ENCODE measurements at regions of chr3 and their contacts with region 1.

Region 1: DNA sequence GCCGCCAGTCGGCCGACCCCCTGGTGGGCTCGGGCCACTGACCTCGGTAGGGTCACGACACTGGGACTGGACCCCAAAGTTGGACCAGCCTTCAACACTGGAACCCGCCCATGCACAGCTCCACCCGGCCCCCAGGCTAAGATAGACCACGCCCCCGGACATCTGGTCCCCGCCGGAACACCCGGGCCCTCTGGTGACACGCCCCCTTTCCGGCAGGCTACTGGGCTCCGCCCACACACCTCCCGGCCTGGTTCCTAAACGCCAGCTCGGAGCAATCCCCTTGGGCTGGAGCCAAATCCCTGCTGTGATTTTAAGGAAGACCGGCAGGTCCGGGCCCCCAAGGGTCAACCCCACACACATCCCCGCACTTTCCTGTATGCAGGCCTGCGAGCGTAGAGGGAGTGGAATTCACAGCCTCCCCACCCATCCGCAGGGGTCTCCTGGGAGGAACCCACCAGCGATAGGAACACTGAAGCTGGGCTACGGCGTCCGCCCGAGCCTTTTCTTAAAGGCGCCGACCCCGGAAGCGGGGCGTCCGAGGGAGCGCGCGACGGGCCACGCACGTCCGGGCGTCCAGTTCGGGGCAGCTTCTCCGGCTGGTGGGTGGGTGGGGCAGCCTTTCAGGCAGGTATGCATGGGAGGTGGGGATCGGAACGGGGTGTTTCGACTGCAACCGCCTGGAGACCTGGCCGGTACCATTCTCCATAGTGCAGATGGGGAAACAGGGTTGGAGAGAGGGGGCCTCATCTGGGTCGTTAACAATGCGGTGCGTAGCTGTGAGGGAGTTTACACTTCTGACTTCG is at the start of gene HEMK1:
- DNase-seq: peak; percentile 92
- H3K4me3 Mint-ChIP-seq: peak within 1 kb of the TSS; percentile 97
- H3K27ac Mint-ChIP-seq: peak within 1 kb of the TSS; percentile 97
- H3K4me1 Mint-ChIP-seq: peaks cover 78% of the 10 kb centered on the region
- H3K27me3 Mint-ChIP-seq: no peaks in the 10 kb centered on the region
- total RNA-seq, gene HEMK1: 54.1 and 58.0 TPM in 2 replicates

Region 2: GRCh38 chr3:50292159-50293078 is 276.7 kb before region 1 on chr3 and contains the start of gene IFRD2:
- intact Hi-C with region 1: loop called (anchors 1 kb)
- DNase-seq: peak; percentile 95
- H3K4me3 Mint-ChIP-seq: peak within 1 kb of the TSS; percentile 96
- H3K27ac Mint-ChIP-seq: peak within 1 kb of the TSS; percentile 83
- H3K4me1 Mint-ChIP-seq: peaks cover 14% of the 10 kb centered on the region
- H3K27me3 Mint-ChIP-seq: no peaks in the 10 kb centered on the region
- total RNA-seq, gene IFRD2: 215 TPM in 2 replicates

Region 3: GRCh38 chr3:50358911-50359759 is 210.0 kb before region 1 on chr3 and contains the start of gene TMEM115:
- intact Hi-C with region 1: loop called (anchors 1 kb)
- DNase-seq: peak; percentile 95
- H3K4me3 Mint-ChIP-seq: peak within 1 kb of the TSS; percentile 99
- H3K27ac Mint-ChIP-seq: peak within 1 kb of the TSS; percentile 96
- H3K4me1 Mint-ChIP-seq: peaks cover 43% of the 10 kb centered on the region
- H3K27me3 Mint-ChIP-seq: peaks cover 4% of the 10 kb centered on the region
- total RNA-seq, gene TMEM115: 23.6 and 25.4 TPM in 2 replicates

Region 4: GRCh38 chr3:50600841-50601591 is 31.9 kb after region 1 on chr3:
- intact Hi-C with region 1: loop called (anchors 1 kb)
- DNase-seq: peak; percentile 81
- H3K4me3 Mint-ChIP-seq: peak overlapping the region; percentile 99
- H3K27ac Mint-ChIP-seq: peak overlapping the region; percentile 98
- H3K4me1 Mint-ChIP-seq: peaks cover 83% of the 10 kb centered on the region
- H3K27me3 Mint-ChIP-seq: no peaks in the 10 kb centered on the region

Region 5: GRCh38 chr3:50971487-50971924 is 402.4 kb after region 1 on chr3:
- intact Hi-C with region 1: loop called (anchors 5 kb)
- DNase-seq: peak; percentile 60
- H3K4me3 Mint-ChIP-seq: no peak overlapping the region
- H3K27ac Mint-ChIP-seq: no peak overlapping the region
- H3K4me1 Mint-ChIP-seq: peaks cover 20% of the 10 kb centered on the region
- H3K27me3 Mint-ChIP-seq: no peaks in the 10 kb centered on the region

Region 6: DNA sequence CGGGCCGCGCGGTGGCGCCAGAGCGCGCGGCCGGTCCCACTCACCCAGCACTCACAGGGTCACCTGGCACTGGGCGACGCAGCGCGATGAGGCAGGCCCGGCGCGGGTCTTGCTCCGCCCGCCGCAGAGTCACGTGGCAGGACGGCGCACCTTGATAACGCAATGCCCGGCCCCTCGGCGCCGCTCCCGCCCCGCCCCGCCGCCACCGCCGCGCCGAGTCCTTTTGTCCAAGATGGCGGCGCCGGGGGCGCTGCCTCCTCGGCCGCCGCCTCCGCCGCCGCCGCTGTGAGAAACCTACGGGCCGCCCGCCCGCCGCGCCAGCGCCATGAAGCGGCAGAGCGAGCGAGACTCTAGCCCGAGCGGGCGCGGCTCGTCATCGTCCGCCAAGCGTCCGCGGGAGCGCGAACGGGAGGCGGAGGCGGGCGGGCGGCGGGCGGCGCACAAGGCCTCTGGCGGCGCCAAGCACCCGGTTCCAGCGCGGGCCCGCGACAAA is 822.0 kb after region 1 on chr3 and contains the start of gene RBM15B:
- intact Hi-C with region 1: loop called (anchors 1 kb)
- DNase-seq: peak; percentile 98
- H3K4me3 Mint-ChIP-seq: peak within 1 kb of the TSS; percentile 85
- H3K27ac Mint-ChIP-seq: peak within 1 kb of the TSS; percentile 86
- H3K4me1 Mint-ChIP-seq: peaks cover 66% of the 10 kb centered on the region
- H3K27me3 Mint-ChIP-seq: no peaks in the 10 kb centered on the region
- total RNA-seq, gene RBM15B: 38.5 and 39.6 TPM in 2 replicates

Region 7: GRCh38 chr3:52400275-52400793 is 1831.2 kb after region 1 on chr3:
- intact Hi-C with region 1: no loop called
- DNase-seq: no peak
- H3K4me3 Mint-ChIP-seq: no peak overlapping the region
- H3K27ac Mint-ChIP-seq: no peak overlapping the region
- H3K4me1 Mint-ChIP-seq: no peaks in the 10 kb centered on the region
- H3K27me3 Mint-ChIP-seq: no peaks in the 10 kb centered on the region

Region 8: DNA sequence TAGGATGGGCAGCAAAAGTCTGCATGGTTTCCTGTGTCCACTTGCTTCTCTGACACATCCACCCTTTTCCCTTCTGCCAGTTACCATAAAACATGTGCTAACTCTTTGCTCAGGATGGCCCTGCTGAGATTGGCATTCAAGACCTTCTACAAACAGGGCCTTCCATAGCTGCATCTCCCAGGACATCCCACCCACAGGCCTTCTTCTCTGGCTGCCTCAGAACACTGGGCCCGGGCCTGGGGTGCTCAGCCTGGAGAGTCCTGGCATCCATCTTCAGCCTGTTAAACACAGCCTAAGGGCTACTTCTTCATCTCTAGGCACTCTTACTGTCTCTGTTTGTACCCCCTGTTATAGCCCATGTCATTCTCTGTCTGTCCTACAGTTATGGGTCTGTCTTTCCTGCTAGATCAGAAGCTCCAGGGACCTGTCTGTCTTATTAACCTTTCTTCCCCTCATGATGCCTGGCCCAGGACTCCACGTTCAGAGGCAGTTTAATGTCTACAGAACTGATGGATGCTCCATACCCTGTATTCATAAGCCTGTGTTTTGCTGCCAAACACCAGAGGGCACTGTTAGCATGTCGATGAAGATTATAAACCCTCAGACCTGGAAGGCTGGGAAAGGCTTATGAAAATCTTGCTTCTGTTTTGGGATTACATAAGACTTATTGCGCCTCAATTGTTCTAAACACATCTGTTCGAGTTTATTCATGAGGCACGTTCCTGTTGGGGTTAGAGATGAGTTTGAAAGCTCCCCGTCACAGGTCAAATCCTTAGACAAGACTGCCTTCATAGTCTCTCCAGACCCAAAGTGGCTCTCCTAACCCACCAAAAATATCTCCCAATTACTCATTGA is 1859.2 kb after region 1 on chr3:
- intact Hi-C with region 1: no loop called
- DNase-seq: no peak
- H3K4me3 Mint-ChIP-seq: no peak overlapping the region
- H3K27ac Mint-ChIP-seq: no peak overlapping the region
- H3K4me1 Mint-ChIP-seq: no peaks in the 10 kb centered on the region
- H3K27me3 Mint-ChIP-seq: peaks cover 12% of the 10 kb centered on the region